Prostate gland (tissue), 2 donors: ENCODE measurements at regions of chr12 and their contacts with region 1.

Region 1: DNA sequence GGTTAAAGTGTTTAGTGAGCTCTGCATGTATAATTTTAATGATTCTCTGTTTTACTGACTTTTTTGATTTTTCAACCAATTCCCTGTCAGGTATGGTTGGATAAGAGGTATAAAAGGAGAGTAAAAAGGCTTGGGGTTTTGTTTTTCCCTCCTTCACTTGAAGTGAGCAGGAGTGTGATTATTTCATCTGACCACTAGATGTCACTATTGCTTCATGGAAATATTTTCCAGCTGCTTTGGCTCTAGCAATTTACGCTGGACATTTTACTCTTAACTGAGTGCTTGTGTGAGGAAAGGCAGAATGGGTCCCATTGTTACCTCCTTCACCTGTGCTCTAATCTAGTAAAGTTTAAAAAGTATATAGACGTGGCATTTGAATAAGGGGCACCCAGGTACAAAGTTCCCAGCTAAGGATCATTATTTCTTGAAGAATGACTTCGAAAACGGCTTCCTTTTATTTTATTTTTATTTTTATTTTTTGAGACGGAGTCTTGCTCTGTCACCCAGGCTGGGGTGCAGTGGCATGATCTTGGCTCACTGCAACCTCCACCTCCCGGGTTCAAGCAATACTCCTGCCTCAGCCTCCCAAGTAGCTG is 66.5 kb downstream of the TBC1D30 start:
- DNase-seq: peak; percentile 33
- H3K4me3 ChIP-seq: no peak overlapping the region
- H3K27ac ChIP-seq: no peak overlapping the region
- H3K4me1 ChIP-seq: no peaks in the 10 kb centered on the region
- H3K27me3 ChIP-seq: no peaks in the 10 kb centered on the region
- CTCF ChIP-seq: peak; percentile 79 to 92 (median 88)
- POLR2A ChIP-seq: no peak

Region 2: GRCh38 chr12:64650762-64651161 is 240.2 kb before region 1 on chr12:
- intact Hi-C with region 1: no loop called
- DNase-seq: peak; percentile 66
- H3K4me3 ChIP-seq: no peak overlapping the region
- H3K27ac ChIP-seq: no peak overlapping the region
- H3K4me1 ChIP-seq: no peaks in the 10 kb centered on the region
- H3K27me3 ChIP-seq: no peaks in the 10 kb centered on the region
- CTCF ChIP-seq: no peak
- POLR2A ChIP-seq: no peak

Region 3: GRCh38 chr12:64840949-64841717 is 49.8 kb before region 1 on chr12:
- intact Hi-C with region 1: no loop called
- DNase-seq: no peak
- H3K4me3 ChIP-seq: no peak overlapping the region
- H3K27ac ChIP-seq: no peak overlapping the region
- H3K4me1 ChIP-seq: no peaks in the 10 kb centered on the region
- H3K27me3 ChIP-seq: no peaks in the 10 kb centered on the region
- CTCF ChIP-seq: no peak
- POLR2A ChIP-seq: no peak

Region 4: GRCh38 chr12:65106948-65107347 is 216.0 kb after region 1 on chr12:
- intact Hi-C with region 1: loop called (anchors 10 kb)
- DNase-seq: no peak
- H3K4me3 ChIP-seq: no peak overlapping the region
- H3K27ac ChIP-seq: no peak overlapping the region
- H3K4me1 ChIP-seq: no peaks in the 10 kb centered on the region
- H3K27me3 ChIP-seq: no peaks in the 10 kb centered on the region
- CTCF ChIP-seq: peak in 3 of 4 experiments; percentile 33 to 62 (median 53)
- POLR2A ChIP-seq: no peak

Region 5: DNA sequence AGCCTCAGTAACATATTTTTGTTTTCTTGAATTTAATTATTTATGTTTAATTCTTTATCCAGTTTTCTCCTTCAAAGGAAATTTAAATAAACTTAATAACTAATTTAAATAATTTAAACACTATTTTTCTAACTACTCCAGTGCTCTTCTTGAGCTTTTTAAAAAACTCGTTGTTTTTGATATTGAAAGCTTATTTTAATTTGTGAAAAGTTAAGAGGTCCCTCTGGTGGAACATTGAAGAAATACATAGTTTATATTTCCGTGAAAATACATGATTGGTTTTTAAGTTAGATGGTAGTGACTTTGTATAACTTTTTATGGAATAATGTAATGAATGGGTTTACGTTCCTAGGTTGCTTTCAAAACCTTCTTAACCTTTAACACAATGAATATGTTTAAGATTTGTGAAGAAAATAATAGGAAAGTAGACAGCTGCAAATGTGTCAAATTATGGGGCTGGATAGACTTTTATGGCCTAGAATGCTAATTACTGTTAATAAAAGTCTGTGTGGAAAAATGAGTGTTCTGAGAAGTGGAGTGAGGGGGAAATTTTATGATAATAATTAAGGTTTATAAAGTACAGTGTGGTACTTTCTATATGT is 341.6 kb after region 1 on chr12:
- intact Hi-C with region 1: loop called (anchors 5 kb)
- DNase-seq: no peak
- H3K4me3 ChIP-seq: no peak overlapping the region
- H3K27ac ChIP-seq: no peak overlapping the region
- H3K4me1 ChIP-seq: no peaks in the 10 kb centered on the region
- H3K27me3 ChIP-seq: no peaks in the 10 kb centered on the region
- CTCF ChIP-seq: peak in 3 of 4 experiments; percentile 25 to 39 (median 31)
- POLR2A ChIP-seq: no peak

Region 6: DNA sequence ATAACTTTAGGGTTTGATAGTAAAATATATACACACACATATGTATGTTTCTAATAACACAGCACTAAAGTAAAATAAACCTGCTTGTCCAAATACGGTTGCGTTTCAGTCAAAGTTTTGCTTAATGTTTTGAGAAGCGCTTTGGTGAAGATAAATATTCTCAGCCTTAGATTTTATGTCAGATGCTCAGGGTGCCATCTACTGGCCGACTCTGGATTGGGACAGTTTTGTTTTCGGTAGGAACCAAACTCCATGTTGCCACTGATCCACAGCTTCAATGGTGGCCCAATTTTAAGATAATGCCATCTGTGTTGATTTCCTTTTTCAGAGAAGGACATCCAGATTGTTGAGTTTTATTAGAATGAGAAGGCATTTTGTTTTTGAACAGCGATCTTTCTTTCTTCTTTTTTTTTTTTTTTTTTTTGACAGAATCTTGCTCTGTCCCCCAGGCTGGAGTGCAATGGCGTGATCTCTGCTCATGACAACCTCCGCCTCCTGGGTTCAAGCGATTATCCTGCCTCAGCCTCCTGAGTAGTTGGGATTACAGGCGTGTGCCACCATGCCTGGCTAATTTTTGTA is 1196.5 kb after region 1 on chr12:
- intact Hi-C with region 1: loop called (anchors 5 kb)
- DNase-seq: peak; percentile 54
- H3K4me3 ChIP-seq: no peak overlapping the region
- H3K27ac ChIP-seq: no peak overlapping the region
- H3K4me1 ChIP-seq: no peaks in the 10 kb centered on the region
- H3K27me3 ChIP-seq: no peaks in the 10 kb centered on the region
- CTCF ChIP-seq: peak in 3 of 4 experiments; percentile 47 to 62 (median 60)
- POLR2A ChIP-seq: no peak